ENCODE measurements at regions of chr10 and their contacts with region 1.

Region 1: DNA sequence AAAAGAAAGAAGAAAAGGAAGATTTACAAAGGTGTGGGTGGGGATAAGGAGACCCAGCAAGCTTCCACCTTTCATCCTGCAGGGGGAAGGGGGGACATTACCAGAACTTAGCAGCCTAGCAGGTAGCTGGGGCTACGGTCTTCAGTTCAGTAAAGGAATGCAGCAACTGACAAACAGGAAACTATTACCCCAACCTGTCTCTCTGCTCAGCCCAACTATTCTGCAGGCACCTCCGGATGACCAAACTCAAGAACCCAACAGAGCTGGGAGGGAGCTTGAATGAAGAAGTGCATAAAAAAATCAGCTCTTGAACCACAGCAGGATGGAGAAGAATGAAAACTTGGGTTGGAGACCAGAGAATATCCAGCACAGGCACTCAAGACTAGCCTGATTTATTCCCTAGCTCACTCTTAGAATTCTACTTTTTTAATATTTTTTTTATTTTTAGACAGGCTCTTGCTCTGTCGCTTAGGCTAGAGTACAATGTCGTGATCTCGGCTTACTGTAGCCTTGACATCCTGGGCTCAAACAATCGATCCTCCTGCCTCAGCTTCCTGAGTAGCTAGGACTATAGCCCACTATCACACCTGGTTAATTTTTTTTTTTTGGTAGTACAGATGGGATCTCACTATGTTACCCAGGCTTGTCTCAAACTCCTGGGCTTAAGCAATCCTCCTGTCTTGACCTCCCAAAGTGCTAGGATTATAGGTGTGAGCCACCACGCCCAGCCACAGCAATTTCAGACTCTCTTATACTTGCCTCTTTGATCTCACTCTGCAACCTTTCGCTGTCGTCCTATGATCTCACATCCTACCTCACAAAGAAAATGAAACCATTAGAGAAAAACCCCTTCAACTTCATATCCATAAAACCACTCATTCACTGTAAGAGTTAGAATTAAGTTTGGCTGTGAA is 18.5 kb upstream of the C10orf67 start:
- DNase-seq: no peak
- ATAC-seq: peak; percentile 86
- H3K4me3 Mint-ChIP-seq: peak overlapping the region; percentile 81
- H3K27ac Mint-ChIP-seq: peak overlapping the region; percentile 99
- H3K4me1 Mint-ChIP-seq: peaks cover 48% of the 10 kb centered on the region
- H3K27me3 Mint-ChIP-seq: no peaks in the 10 kb centered on the region

Region 2: GRCh38 chr10:23344241-23344841 is 18.8 kb before region 1 on chr10 and contains the start of gene C10orf67:
- POLR2A ChIA-PET with region 1: interaction called, 20 read pairs
- DNase-seq: peak; percentile 54
- ATAC-seq: peak; percentile 51
- H3K4me3 Mint-ChIP-seq: peak within 1 kb of the TSS; percentile 89
- H3K27ac Mint-ChIP-seq: peak within 1 kb of the TSS; percentile 82
- H3K4me1 Mint-ChIP-seq: peaks cover 28% of the 10 kb centered on the region
- H3K27me3 Mint-ChIP-seq: no peaks in the 10 kb centered on the region
- total RNA-seq, gene C10orf67: 0.20 TPM in 1 of 2 experiments, not detected in the other